Activated T-helper 2 cell treated with anti-CD3 and anti-CD28 coated beads, Interferon-gamma antibody, Interleukin-2, Interleukin-4, amounts not matched to agents 10 μg/mL and 5 μg/mL and 100 μg/mL, durations not matched to agents 14 hours and 24 hours and 36 hours (primary cell): ENCODE measurements at regions of chr9 and their contacts with region 1.

Region 1: GRCh38 chr9:35096035-35096849 is at the start of gene PIGO:
- DNase-seq: peak; percentile 85
- H3K4me3 Mint-ChIP-seq: peak within 1 kb of the TSS; percentile 85
- H3K27ac Mint-ChIP-seq: peak within 1 kb of the TSS; percentile 88
- H3K4me1 Mint-ChIP-seq: peaks cover 19% of the 10 kb centered on the region
- H3K27me3 Mint-ChIP-seq: no peaks in the 10 kb centered on the region
- total RNA-seq, gene PIGO: 33.0 and 37.8 TPM in 2 replicates

Region 2: DNA sequence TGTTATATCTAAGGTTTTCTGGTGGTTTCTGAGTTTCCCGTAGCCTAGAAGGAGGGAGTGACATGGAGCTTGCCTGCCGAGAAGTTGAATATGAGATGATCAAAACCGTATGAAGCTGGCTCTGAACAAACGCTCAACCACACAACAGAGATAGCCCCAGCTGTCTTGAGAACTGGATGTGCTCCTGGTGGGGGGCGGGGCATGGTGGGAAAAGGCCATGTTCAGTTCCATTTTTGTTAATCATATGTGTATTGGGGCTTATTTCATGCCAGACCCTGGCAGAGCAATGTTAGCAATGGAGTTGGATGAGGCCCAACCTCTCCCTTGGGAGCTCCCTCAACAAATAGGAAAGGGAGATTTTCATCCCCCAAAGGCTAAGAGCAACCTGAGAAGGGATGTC is 410.0 kb before region 1 on chr9:
- intact Hi-C with region 1: no loop called
- DNase-seq: no peak
- H3K4me3 Mint-ChIP-seq: no peak overlapping the region
- H3K27ac Mint-ChIP-seq: no peak overlapping the region
- H3K4me1 Mint-ChIP-seq: peaks cover 2% of the 10 kb centered on the region
- H3K27me3 Mint-ChIP-seq: no peaks in the 10 kb centered on the region

Region 3: DNA sequence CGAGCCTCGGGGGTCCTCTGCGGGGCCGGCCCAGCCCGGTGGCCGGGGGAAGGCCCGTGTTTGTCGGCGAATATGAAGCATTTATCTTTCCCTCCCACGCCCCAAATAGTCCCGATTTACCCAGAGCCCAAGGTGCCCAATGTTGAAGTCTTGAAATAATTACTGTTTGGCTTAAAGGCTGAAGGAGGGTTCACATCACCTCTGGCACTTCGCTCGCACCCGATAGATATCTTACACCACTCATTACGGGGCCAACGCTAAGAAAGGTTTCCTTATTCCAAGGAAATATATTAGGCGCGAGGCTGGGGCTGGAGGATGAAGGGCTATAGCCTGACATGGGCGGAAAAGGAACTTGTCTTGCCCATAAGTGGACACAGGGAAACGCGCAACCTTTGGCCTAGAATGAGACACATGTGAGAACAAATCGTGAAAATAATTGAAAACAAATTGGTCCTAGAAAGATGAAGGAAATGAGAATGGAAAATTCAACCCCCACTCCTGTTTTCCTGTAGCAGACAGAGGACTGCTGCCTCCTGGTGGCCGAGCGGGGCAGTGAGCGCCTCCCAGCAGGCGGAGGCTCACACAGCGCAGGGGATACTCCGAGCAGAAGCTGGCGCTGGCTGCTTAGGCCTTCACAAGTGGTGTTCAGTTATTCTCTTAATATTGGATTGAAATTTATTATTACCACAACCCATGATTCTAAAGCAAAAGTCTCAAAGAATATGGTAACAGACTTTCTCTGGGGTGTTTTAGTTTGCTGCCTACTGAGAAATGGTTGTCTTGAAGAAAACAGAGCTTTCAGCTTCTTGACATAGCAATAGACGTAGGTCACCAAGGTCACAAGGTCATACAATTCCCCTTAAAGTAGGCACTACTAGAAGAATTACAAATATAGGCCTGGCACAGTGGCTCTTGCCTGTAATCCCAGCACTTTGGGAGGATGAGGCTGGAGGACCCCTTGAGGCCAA is 394.2 kb before region 1 on chr9:
- intact Hi-C with region 1: loop called (anchors 1 kb)
- DNase-seq: peak; percentile 69
- H3K4me3 Mint-ChIP-seq: peak overlapping the region; percentile 79
- H3K27ac Mint-ChIP-seq: peak overlapping the region; percentile 29
- H3K4me1 Mint-ChIP-seq: peaks cover 5% of the 10 kb centered on the region
- H3K27me3 Mint-ChIP-seq: peaks cover 19% of the 10 kb centered on the region

Region 4: GRCh38 chr9:34899535-34900158 is 196.6 kb before region 1 on chr9:
- intact Hi-C with region 1: loop called (anchors 1 kb)
- DNase-seq: peak; percentile 63
- H3K4me3 Mint-ChIP-seq: no peak overlapping the region
- H3K27ac Mint-ChIP-seq: no peak overlapping the region
- H3K4me1 Mint-ChIP-seq: no peaks in the 10 kb centered on the region
- H3K27me3 Mint-ChIP-seq: peaks cover 37% of the 10 kb centered on the region

Region 5: DNA sequence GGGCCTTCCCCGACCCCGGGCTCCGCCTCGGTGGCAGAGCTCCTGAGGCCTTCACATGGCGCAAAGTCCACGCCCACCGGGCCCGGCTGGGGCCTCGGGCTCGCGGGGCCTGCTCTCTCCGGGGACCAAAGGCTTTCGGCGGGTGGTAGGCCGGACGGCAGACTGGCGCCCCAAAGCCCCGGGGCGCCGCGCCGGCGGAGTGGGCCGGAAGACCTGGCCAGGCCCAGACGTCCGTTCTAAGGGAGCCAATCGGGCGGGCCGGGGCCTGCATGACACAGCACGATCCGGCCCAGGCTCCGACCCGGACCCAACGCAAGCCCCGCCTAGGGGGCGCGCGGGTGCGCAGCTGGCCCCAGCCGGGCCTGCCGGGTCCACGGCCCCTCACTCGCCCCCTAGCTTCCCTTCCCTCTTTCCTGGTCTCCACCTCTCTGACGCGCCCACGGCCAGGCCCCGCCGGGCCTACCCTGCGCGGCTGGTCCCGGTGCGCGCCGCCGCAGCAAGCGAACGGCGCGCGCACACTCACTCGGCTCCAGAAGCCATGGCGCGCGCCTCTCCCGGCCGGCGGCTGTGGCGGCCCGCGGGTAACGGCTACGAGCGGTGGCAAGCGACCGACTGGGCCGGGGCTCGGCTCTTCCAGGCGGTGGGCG is 24.3 kb before region 1 on chr9:
- intact Hi-C with region 1: loop called (anchors 1 kb)
- DNase-seq: peak; percentile 72
- H3K4me3 Mint-ChIP-seq: peak overlapping the region; percentile 91
- H3K27ac Mint-ChIP-seq: peak overlapping the region; percentile 88
- H3K4me1 Mint-ChIP-seq: peaks cover 43% of the 10 kb centered on the region
- H3K27me3 Mint-ChIP-seq: no peaks in the 10 kb centered on the region

Region 6: DNA sequence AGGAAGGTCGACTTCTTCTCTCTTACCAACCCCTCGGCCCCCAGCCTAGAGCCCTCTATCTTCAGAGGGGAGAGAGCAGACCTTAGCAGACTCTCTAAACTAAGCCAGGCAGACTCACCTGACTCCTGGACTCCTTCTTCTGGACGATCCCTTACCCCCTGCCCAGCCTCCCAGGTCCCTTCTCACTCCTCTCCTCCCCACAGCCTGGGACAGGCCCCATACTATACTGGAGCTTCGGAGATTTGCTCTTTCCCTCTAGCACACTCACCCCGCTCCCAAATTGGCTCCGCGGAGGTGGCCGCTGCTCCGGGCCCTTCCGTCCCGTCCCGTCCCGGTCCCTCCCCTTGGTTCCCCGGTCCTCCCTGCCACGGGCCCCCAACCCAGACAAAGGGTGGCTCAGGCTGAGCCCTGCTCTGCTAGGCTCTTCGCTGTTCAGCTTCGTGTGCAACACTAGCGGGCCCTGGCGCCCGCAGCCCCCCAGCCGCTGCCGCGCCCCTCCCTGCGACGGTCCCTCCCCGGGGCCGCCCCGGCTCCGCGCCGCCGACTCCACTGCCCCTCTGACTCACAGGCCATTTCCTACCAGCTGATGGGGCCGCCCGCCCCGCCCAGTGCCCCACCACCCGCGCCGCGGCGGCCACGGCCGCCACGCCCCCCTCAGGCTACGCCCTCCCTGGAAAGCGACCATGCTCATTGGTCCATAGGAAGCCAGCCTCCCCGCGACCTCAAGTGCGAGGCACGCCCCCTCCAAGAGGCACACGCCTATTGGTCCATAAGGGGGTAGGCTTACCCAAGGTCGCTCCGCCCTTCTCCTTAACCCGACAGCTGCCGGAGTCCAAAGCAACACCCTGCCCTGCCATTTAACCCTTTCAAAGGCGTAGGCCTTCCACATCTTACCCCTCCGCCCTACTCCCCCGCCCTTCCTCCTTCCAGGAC is 15.0 kb after region 1 on chr9:
- intact Hi-C with region 1: loop called (anchors 1 kb)
- DNase-seq: peak; percentile 93
- H3K4me3 Mint-ChIP-seq: peak overlapping the region; percentile 71
- H3K27ac Mint-ChIP-seq: peak overlapping the region; percentile 81
- H3K4me1 Mint-ChIP-seq: peaks cover 35% of the 10 kb centered on the region
- H3K27me3 Mint-ChIP-seq: no peaks in the 10 kb centered on the region